ENCODE measurements at regions of chr4 and their contacts with region 1.

Region 1: DNA sequence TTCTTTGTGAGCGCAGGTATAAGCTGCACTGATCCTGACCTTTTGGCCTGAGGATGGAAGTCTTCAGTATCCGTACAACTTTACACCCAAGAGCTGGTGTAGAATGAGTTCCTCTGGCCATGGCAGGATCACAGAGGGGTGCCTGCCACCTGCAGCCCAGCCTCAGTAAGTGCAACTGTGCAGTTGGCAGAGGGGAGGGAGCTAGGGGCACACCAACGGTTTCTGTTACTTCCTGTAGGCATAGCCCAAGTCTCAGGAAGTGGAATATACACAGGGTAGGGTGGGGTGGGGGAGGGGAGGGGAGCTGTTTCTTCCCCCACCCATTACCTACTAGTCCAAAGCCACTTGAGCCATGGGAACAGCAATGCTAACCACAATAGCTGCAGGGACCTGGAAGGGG is 85.4 kb upstream of the GBA3 start:
- DNase-seq: peak; percentile 67 to 72
- H3K4me3 ChIP-seq: no peak overlapping the region
- H3K27ac ChIP-seq: no peak overlapping the region
- H3K4me1 ChIP-seq: no peaks in the 10 kb centered on the region
- H3K27me3 ChIP-seq: no peaks in the 10 kb centered on the region
- CTCF ChIP-seq: peak; percentile 37 to 85 (median 74)
- POLR2A ChIP-seq: no peak

Region 2: GRCh38 chr4:22410645-22411247 is 196.6 kb before region 1 on chr4:
- intact Hi-C with region 1: loop called (anchors 5 kb)
- DNase-seq: no peak
- H3K4me3 ChIP-seq: no peak overlapping the region
- H3K27ac ChIP-seq: no peak overlapping the region
- H3K4me1 ChIP-seq: no peaks in the 10 kb centered on the region
- H3K27me3 ChIP-seq: no peaks in the 10 kb centered on the region
- CTCF ChIP-seq: peak in 5 of 6 experiments; percentile 20 to 78 (median 58)
- POLR2A ChIP-seq: no peak